A673 (cell line): ENCODE measurements at regions of chr1 and their contacts with region 1.

Region 1: DNA sequence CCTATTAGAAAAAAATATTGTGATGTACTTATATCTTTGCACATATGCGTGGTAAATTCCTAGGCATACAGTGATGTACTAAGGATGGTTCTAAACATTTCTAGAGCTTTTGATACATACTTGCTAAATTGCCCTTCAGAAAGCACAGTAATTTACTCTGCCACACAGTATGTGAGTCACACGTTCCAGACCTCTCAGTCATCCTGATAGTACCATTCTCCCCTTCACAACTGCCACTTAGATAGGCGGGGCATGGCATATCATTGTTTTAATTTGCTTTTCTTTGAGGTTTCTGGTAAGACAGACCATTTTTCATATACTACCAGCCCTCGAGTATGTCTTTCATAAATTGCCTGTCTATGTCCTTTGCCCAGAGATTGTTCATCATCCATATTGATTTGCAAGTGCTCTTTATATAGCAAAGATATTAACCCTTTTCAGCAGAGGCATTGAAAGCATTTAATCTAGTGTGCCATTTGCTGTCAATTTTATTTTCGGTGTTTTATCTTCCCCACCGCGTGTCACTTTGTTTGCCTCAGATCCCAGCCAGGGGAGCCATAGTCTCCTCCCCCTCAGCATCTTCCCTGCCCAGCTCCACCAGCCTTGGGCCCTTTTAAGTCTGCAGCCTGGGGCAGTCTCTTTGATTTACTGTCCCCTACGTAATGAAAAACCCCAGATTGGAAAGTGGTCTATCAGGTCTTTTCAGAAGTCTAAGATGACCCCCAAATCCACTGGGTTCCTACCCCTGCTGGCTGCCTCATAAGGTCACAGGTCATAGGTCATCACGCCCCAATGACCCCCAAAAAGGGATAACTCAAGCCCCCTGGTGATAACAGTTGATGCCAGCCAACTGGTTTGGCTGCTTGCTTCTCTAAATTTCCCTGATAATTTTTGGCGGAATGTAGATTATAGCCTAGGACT is 11.8 kb upstream of the PAX7 start:
- DNase-seq: peak; percentile 81
- H3K4me3 ChIP-seq: no peak overlapping the region
- H3K27ac ChIP-seq: no peak overlapping the region
- H3K4me1 ChIP-seq: peaks cover 7% of the 10 kb centered on the region
- H3K27me3 ChIP-seq: no peaks in the 10 kb centered on the region
- CTCF ChIP-seq: no peak

Region 2: GRCh38 chr1:18630511-18631495 is 12.0 kb after region 1 on chr1 and contains the start of gene PAX7:
- CTCF ChIA-PET with region 1: no interaction called
- POLR2A ChIA-PET with region 1: interaction called, 11 read pairs
- intact Hi-C with region 1: no loop called
- DNase-seq: peak; percentile 67
- H3K4me3 ChIP-seq: peak within 1 kb of the TSS; percentile 56
- H3K27ac ChIP-seq: peak within 1 kb of the TSS; percentile 77
- H3K4me1 ChIP-seq: peaks cover 11% of the 10 kb centered on the region
- H3K27me3 ChIP-seq: peaks cover 37% of the 10 kb centered on the region
- CTCF ChIP-seq: 0 out of 2 replicates have a peak, but pooled peaks have one; percentile 11
- total RNA-seq, gene PAX7: 29.8 and 36.5 TPM in 2 replicates

Region 3: DNA sequence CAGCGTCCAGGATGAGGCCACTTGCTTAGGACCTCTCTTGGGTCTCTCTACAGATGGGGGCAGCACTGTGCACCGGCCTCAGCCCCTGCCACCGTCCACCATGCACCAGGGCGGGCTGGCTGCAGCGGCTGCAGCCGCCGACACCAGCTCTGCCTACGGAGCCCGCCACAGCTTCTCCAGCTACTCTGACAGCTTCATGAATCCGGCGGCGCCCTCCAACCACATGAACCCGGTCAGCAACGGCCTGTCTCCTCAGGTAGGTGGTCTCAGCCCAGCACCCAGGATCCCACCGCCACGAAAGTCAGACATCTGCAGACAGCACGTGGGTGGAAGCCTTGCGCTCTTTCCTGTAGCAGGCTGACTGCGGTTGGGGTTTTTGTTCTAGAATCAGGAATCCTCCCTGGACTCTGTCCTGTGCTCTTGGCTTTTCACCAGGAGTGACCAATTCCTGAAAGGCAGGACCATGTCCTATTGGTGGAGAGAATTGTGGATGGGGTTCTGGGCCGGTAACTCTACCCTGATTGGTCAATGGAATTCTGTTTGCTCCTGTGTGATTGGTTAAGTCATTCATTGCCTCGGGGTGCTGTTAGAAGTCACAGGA is 84.3 kb after region 1 on chr1:
- CTCF ChIA-PET with region 1: no interaction called
- POLR2A ChIA-PET with region 1: no interaction called
- intact Hi-C with region 1: no loop called
- DNase-seq: no peak
- H3K4me3 ChIP-seq: no peak overlapping the region
- H3K27ac ChIP-seq: no peak overlapping the region
- H3K4me1 ChIP-seq: peaks cover 11% of the 10 kb centered on the region
- H3K27me3 ChIP-seq: no peaks in the 10 kb centered on the region
- CTCF ChIP-seq: no peak

Region 4: DNA sequence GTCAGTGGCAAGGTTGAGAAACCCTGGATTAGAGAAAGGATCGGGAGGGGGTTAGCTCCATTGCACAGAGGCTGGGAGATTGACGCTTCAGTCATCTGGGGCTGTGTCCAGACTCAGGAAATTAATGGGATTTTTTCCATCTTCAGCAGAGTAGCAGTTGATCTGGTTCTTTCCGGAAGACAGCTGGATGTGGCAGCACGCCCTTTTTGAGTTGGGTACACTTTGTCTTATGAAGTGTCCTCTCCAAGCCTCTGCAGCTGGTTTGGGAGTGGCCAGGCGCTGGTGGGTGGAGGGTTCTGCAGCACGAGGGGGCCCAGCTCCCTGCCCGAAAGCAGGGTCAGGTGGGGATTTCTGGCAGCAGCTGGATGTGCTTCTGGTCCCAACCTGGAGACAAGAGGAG is 145.6 kb after region 1 on chr1:
- CTCF ChIA-PET with region 1: no interaction called
- POLR2A ChIA-PET with region 1: no interaction called
- intact Hi-C with region 1: no loop called
- DNase-seq: no peak
- H3K4me3 ChIP-seq: no peak overlapping the region
- H3K27ac ChIP-seq: no peak overlapping the region
- H3K4me1 ChIP-seq: no peaks in the 10 kb centered on the region
- H3K27me3 ChIP-seq: peaks cover 6% of the 10 kb centered on the region
- CTCF ChIP-seq: no peak